Activated CD4-positive, alpha-beta T cell treated with anti-CD3 and anti-CD28 coated beads for 36 hours (primary cell): ENCODE measurements at regions of chr6 and their contacts with region 1.

Region 1: DNA sequence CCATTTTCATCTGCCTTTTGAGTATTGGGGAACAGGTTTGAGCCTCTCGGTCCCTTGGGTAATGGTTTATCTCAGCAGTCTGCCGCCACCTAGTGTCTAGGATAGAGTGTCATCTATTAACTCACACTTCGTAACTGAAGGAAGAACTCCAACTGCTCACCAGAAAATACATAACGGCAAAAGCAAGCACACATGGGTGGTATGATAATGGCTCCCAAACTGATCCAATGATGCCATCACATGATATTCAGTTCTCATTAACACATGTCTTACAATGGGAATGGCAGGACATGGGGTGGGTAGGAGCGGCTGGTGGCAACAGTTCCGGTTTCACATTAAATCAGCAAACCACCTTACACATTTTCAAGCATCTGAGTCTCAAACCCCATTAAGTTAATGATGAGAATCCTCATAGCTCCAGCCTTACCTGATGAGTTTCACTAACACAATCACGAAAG is 110.7 kb upstream of the PHACTR1 start:
- DNase-seq: peak; percentile 68
- ATAC-seq: peak; percentile 81
- H3K4me3 Mint-ChIP-seq: no peak overlapping the region
- H3K27ac Mint-ChIP-seq: no peak overlapping the region
- H3K4me1 Mint-ChIP-seq: peaks cover 7% of the 10 kb centered on the region
- H3K27me3 Mint-ChIP-seq: peaks cover 22% of the 10 kb centered on the region

Region 2: DNA sequence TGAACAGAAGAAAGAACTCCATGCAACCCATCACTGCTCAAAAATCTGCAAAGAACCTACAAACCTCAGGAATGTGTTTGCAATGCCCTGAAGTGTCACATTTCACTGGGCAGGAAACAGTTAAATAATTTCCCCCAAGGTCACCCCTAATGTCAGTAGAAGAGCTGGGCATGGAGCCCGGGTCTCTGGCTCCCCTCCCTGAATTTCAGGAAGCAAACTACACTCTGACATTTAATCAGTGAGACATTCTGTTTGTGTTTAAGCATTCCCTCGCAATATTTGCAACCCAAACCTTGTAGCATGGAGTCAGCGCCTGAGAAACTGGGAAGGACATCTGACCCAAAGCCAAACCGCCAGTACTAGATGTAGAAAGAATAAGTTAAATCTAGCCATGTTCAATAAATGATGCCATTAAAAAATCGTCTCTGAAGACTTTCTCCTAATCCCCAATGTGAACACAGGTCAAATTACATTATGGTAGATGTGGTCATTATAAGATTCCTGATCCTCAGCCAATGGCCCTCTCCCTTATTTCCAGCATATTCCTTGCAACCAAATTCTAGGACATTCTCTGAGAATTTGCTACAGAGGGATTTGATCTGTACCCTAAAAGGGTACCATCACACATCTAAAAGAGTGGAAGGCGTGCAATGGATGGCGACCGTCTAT is 736.1 kb before region 1 on chr6:
- CTCF ChIA-PET with region 1: no interaction called
- POLR2A ChIA-PET with region 1: no interaction called
- intact Hi-C with region 1: loop called in 1 of 2 experiments (anchors 10 kb)
- DNase-seq: no peak
- ATAC-seq: no peak
- H3K4me3 Mint-ChIP-seq: no peak overlapping the region
- H3K27ac Mint-ChIP-seq: no peak overlapping the region
- H3K4me1 Mint-ChIP-seq: no peaks in the 10 kb centered on the region
- H3K27me3 Mint-ChIP-seq: no peaks in the 10 kb centered on the region